Activated CD4-positive, alpha-beta T cell treated with anti-CD3 and anti-CD28 coated beads for 36 hours (primary cell): ENCODE measurements at regions of chr20 and their contacts with region 1.

Region 1: DNA sequence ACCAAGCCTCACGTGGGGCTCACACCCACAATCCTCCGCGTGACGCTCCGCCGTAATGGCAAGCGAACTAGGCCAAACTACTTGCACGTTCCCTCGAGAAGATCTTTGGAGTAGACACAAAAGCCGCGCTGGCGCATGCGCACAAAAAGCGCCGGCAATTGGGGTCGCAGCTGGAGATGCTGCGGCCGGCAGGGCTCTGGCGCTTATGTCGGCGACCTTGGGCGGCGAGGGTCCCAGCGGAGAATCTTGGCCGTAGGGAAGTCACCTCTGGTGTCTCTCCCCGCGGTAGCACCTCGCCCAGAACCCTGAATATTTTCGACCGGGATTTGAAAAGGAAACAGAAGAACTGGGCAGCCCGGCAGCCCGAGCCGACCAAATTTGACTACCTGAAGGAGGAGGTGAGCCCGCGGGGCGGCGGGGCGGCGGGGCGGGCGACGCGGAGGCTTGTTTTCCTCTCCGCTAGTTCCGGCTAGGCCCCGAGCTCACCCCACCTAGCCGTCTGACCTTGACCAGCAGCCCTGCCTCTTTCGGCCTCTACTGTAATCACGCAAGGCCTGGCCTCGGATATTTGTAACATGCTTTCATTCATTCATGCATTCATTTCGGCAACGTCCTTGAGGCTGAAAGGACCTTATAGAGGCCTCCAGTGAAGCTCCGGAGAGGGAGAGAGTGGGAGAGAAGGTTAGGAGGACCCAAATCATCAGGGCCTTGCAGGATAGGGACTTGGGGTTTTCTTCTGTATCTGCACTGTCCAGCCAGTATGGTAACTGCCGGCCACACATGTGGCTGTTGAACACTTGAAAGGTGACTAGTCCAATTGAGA is at the starts of genes ESF1 and NDUFAF5:
- DNase-seq: peak; percentile 95
- ATAC-seq: peak; percentile 95
- H3K4me3 Mint-ChIP-seq: peak within 1 kb of the TSS; percentile 82
- H3K27ac Mint-ChIP-seq: peak within 1 kb of the TSS; percentile 89
- H3K4me1 Mint-ChIP-seq: peaks cover 53% of the 10 kb centered on the region
- H3K27me3 Mint-ChIP-seq: no peaks in the 10 kb centered on the region
- total RNA-seq, gene ESF1: 22.0 to 23.1 TPM
- total RNA-seq, gene NDUFAF5: 22.0 to 24.3 TPM

Region 2: DNA sequence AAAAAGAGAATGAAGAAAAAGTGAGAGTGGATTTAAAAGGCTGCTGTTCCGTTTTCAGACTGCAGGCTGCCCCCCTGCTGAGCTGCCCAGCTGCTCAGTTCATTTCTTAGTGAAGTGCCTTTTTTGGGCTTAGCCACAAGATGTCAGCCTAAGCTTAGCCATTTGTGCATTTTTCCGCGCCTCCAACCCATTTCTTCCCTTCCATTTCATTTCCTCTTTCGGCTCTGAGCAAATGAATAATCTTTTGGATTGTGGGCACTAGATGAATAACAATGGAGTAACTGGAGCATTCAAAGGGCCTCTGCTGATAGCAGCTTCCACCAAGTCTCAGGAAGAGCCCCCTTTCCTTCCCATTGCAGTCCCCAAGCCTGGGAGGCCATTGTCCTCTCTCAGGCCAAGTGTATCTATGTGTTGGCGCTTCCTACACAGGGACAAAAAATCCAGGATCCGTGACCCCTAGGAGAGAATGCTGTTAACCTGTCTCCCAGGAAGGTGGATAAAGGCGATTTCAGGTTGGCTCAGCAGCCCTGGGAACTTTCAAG is 859.8 kb before region 1 on chr20:
- CTCF ChIA-PET with region 1: no interaction called
- POLR2A ChIA-PET with region 1: no interaction called
- intact Hi-C with region 1: loop called in 1 of 2 experiments (anchors 5 kb)
- DNase-seq: peak; percentile 65
- ATAC-seq: peak; percentile 79
- H3K4me3 Mint-ChIP-seq: no peak overlapping the region
- H3K27ac Mint-ChIP-seq: no peak overlapping the region
- H3K4me1 Mint-ChIP-seq: peaks cover 11% of the 10 kb centered on the region
- H3K27me3 Mint-ChIP-seq: no peaks in the 10 kb centered on the region

Region 3: DNA sequence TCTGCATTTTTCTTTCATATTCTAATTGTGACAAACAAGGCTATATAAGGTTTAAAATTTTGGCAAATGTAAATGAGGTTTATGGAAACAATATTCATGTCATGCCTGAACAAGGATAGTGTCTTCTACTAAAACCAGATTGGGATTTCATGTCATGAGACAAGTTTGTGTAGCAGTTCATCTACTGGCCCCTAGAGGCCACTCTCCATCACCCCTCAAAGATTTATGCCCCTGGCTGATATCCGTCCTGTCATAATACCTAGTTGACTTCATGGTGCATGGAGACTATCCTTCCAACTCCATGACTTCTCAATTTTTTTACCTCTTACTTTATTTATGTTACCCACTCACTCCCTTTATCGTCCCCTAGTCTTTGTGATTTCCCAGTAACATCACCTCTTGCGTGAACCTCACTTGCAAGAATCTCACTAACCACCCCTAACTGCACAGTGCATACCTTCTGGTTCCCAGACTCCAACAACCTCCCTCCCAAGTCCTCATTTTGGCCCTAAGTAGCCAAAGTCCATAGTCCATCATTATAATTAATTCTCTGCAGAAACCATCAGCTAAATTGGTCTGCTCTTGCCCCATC is 326.1 kb before region 1 on chr20:
- CTCF ChIA-PET with region 1: no interaction called
- POLR2A ChIA-PET with region 1: no interaction called
- intact Hi-C with region 1: loop called in 1 of 2 experiments (anchors 5 kb)
- DNase-seq: peak; percentile 22
- ATAC-seq: peak; percentile 63
- H3K4me3 Mint-ChIP-seq: no peak overlapping the region
- H3K27ac Mint-ChIP-seq: no peak overlapping the region
- H3K4me1 Mint-ChIP-seq: no peaks in the 10 kb centered on the region
- H3K27me3 Mint-ChIP-seq: no peaks in the 10 kb centered on the region

Region 4: DNA sequence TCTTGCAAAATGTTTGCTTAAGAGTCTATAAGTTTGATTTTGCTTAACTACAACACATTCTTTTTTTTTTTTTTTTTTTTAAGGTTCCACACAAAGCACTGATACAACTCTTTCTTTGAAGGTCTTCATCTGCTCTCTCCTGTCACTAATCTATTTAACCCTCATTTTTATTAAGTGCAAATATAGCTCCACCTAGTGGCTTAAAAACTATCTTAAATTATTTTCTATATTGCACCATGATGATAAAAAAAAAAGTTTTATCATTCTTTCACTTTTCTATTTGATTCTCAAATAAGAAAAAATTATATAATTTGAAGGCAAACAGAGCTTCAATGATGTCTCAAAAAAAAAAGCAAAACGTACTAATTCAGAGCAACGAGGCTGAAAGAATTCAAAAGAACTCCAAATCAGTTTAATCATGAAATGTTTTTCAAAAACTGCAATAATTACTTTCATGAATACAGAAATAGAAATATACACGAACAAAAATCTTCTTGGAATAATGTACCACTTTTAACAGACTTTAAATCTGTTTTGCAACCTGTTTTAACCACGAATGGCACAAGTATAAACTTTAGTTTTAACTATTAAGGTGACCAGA is 13.2 kb before region 1 on chr20:
- CTCF ChIA-PET with region 1: interaction called, 23 read pairs
- POLR2A ChIA-PET with region 1: no interaction called
- intact Hi-C with region 1: no loop called
- DNase-seq: no peak
- ATAC-seq: no peak
- H3K4me3 Mint-ChIP-seq: no peak overlapping the region
- H3K27ac Mint-ChIP-seq: no peak overlapping the region
- H3K4me1 Mint-ChIP-seq: peaks cover 12% of the 10 kb centered on the region
- H3K27me3 Mint-ChIP-seq: no peaks in the 10 kb centered on the region

Region 5: DNA sequence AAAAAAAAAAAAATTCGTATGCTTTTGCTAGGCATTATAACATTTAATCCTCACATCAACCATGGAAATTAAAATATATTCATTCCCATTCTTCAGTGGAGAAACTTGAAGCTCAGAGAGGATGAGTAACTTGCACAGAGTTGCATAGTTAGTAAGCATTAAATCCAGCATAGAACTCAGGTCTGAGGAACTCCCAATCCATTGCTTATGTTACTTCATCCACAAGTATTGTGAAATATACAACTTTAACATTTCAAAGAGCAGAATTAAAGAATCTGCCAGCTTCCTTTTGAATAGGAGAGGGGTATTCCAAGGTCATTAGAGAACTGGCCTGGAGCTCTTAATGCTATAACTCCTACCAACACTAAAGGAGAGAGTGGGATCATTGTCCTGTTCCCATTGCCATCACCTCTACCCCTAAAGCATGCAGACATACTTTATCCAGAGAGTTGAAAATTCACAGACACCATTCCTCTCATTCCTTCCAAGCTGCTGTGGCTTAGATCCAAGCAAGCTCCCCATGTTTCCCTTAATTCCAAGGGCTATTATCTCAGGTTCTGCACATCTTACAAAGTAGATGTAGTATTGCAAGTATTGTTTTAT is 460.4 kb after region 1 on chr20:
- CTCF ChIA-PET with region 1: no interaction called
- POLR2A ChIA-PET with region 1: no interaction called
- intact Hi-C with region 1: no loop called
- DNase-seq: no peak
- ATAC-seq: no peak
- H3K4me3 Mint-ChIP-seq: no peak overlapping the region
- H3K27ac Mint-ChIP-seq: no peak overlapping the region
- H3K4me1 Mint-ChIP-seq: no peaks in the 10 kb centered on the region
- H3K27me3 Mint-ChIP-seq: no peaks in the 10 kb centered on the region